ENCODE measurements at regions of chr1 and their contacts with region 1.

Region 1: DNA sequence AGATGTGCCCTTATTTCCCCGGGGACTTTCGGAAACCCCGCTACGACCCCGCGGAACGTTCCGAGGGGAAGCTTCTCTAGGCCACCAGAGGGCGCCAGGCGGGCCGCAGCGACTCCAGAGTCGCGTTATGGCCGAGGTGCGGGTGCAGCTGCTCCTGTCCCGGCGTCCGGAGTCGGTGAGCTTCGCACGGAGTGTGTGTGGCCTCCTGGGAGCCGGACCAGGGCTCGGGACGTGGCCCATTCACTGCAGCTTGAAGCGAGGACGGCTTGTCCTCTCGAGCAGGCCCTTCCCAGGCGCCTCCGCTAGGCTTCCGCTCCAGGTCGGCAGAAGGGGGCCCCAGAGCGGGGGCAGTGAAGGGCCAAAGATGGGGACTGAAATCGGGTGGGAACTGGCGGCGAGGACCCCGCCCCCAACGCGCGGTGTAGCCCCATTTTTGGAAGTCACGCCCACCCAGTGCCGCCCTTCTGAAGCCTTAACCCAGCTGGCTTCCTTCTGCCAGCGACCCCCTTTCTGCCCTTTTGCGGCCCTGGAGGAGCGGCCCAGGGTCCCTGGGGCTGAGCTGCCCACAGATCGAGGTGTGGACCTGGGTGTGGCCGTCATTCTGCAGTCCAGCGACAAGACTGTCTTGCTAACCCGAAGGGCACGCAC is at the start of gene NUDT17:
- DNase-seq: peak; percentile 85
- ATAC-seq: peak; percentile 71
- H3K4me3 Mint-ChIP-seq: no peak within 1 kb of the TSS
- H3K27ac Mint-ChIP-seq: no peak within 1 kb of the TSS
- H3K4me1 Mint-ChIP-seq: peaks cover 13% of the 10 kb centered on the region
- H3K27me3 Mint-ChIP-seq: no peaks in the 10 kb centered on the region
- CTCF ChIP-seq: peak; percentile 87
- total RNA-seq, gene NUDT17: 3.0 to 3.3 TPM

Region 2: GRCh38 chr1:145782166-145783099 is 63.2 kb before region 1 on chr1:
- CTCF ChIA-PET with region 1: interaction called, 11 read pairs
- POLR2A ChIA-PET with region 1: interaction called, 3 read pairs
- intact Hi-C with region 1: no loop called
- DNase-seq: no peak
- ATAC-seq: no peak
- H3K4me3 Mint-ChIP-seq: no peak overlapping the region
- H3K27ac Mint-ChIP-seq: peak overlapping the region; percentile 17
- H3K4me1 Mint-ChIP-seq: peaks cover 31% of the 10 kb centered on the region
- H3K27me3 Mint-ChIP-seq: no peaks in the 10 kb centered on the region
- CTCF ChIP-seq: no peak

Region 3: GRCh38 chr1:145858894-145859490 is 13.4 kb after region 1 on chr1 and contains the start of gene PIAS3:
- CTCF ChIA-PET with region 1: interaction called, 231 read pairs
- POLR2A ChIA-PET with region 1: interaction called, 49 read pairs
- intact Hi-C with region 1: no loop called
- DNase-seq: peak; percentile 92
- ATAC-seq: peak; percentile 87
- H3K4me3 Mint-ChIP-seq: peak within 1 kb of the TSS; percentile 98
- H3K27ac Mint-ChIP-seq: peak within 1 kb of the TSS; percentile 86
- H3K4me1 Mint-ChIP-seq: peaks cover 14% of the 10 kb centered on the region
- H3K27me3 Mint-ChIP-seq: no peaks in the 10 kb centered on the region
- CTCF ChIP-seq: no peak
- total RNA-seq, gene PIAS3: 17.9 to 18.9 TPM

Region 4: GRCh38 chr1:145891587-145892485 is 46.2 kb after region 1 on chr1:
- CTCF ChIA-PET with region 1: interaction called, 91 read pairs
- POLR2A ChIA-PET with region 1: interaction called, 3 read pairs
- intact Hi-C with region 1: no loop called
- DNase-seq: peak; percentile 77
- ATAC-seq: peak; percentile 84
- H3K4me3 Mint-ChIP-seq: no peak overlapping the region
- H3K27ac Mint-ChIP-seq: no peak overlapping the region
- H3K4me1 Mint-ChIP-seq: peaks cover under 1% of the 10 kb centered on the region
- H3K27me3 Mint-ChIP-seq: peaks cover under 1% of the 10 kb centered on the region
- CTCF ChIP-seq: peak; percentile 86

Region 5: GRCh38 chr1:145927063-145927886 is 81.6 kb after region 1 on chr1 and contains the start of gene RBM8A:
- CTCF ChIA-PET with region 1: interaction called, 12 read pairs
- POLR2A ChIA-PET with region 1: interaction called, 5 read pairs
- intact Hi-C with region 1: no loop called
- DNase-seq: peak; percentile 97
- ATAC-seq: peak; percentile 98
- H3K4me3 Mint-ChIP-seq: no peak within 1 kb of the TSS
- H3K27ac Mint-ChIP-seq: no peak within 1 kb of the TSS
- H3K4me1 Mint-ChIP-seq: peaks cover 26% of the 10 kb centered on the region
- H3K27me3 Mint-ChIP-seq: no peaks in the 10 kb centered on the region
- CTCF ChIP-seq: peak; percentile 70
- total RNA-seq, gene RBM8A: 261 to 269 TPM

Region 6: GRCh38 chr1:146012737-146013403 is 167.2 kb after region 1 on chr1:
- CTCF ChIA-PET with region 1: interaction called, 69 read pairs
- POLR2A ChIA-PET with region 1: interaction called, 3 read pairs
- intact Hi-C with region 1: loop called (anchors 5 kb)
- DNase-seq: peak; percentile 76
- ATAC-seq: peak; percentile 69
- H3K4me3 Mint-ChIP-seq: no peak overlapping the region
- H3K27ac Mint-ChIP-seq: no peak overlapping the region
- H3K4me1 Mint-ChIP-seq: peaks cover 9% of the 10 kb centered on the region
- H3K27me3 Mint-ChIP-seq: peaks cover 6% of the 10 kb centered on the region
- CTCF ChIP-seq: peak; percentile 88

Measured in activated CD8-positive, alpha-beta T cell treated with anti-CD3 and anti-CD28 coated beads for 36 hours (primary cell).